Calu3 (cell line): ENCODE measurements at regions of chr6 and their contacts with region 1.

Region 1: GRCh38 chr6:77245026-77245425 is 218.3 kb downstream of the HTR1B start:
- DNase-seq: no peak
- H3K4me3 Mint-ChIP-seq: no peak overlapping the region
- H3K27ac Mint-ChIP-seq: no peak overlapping the region
- H3K4me1 Mint-ChIP-seq: peaks cover 9% of the 10 kb centered on the region
- H3K27me3 Mint-ChIP-seq: no peaks in the 10 kb centered on the region
- CTCF ChIP-seq: no peak

Region 2: DNA sequence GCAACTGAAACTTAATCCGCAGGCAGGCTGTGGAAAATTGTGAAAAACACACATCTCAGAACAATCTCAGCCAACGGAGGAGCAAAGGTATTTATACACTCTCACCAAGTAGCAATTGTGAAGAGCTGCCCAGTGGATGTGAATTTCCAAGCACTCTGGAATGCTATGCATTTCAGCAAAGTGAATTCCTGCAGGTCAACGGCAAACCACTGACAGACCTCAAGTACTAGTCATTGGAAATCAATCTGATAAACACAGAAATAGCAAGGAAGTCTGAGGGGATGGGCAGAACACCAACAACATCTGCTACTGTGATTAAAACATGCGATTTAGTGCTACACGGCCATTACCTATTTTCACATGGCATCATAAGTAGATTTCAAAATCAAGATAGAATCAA is 210.9 kb before region 1 on chr6:
- CTCF ChIA-PET with region 1: no interaction called
- intact Hi-C with region 1: no loop called
- DNase-seq: no peak
- H3K4me3 Mint-ChIP-seq: no peak overlapping the region
- H3K27ac Mint-ChIP-seq: no peak overlapping the region
- H3K4me1 Mint-ChIP-seq: no peaks in the 10 kb centered on the region
- H3K27me3 Mint-ChIP-seq: no peaks in the 10 kb centered on the region
- CTCF ChIP-seq: no peak

Region 3: GRCh38 chr6:77397561-77397960 is 152.5 kb after region 1 on chr6:
- CTCF ChIA-PET with region 1: no interaction called
- intact Hi-C with region 1: no loop called
- DNase-seq: no peak
- H3K4me3 Mint-ChIP-seq: no peak overlapping the region
- H3K27ac Mint-ChIP-seq: no peak overlapping the region
- H3K4me1 Mint-ChIP-seq: no peaks in the 10 kb centered on the region
- H3K27me3 Mint-ChIP-seq: no peaks in the 10 kb centered on the region
- CTCF ChIP-seq: no peak

Region 4: GRCh38 chr6:77450924-77451323 is 205.9 kb after region 1 on chr6:
- CTCF ChIA-PET with region 1: no interaction called
- intact Hi-C with region 1: loop called (anchors 5 kb)
- DNase-seq: no peak
- H3K4me3 Mint-ChIP-seq: no peak overlapping the region
- H3K27ac Mint-ChIP-seq: no peak overlapping the region
- H3K4me1 Mint-ChIP-seq: no peaks in the 10 kb centered on the region
- H3K27me3 Mint-ChIP-seq: no peaks in the 10 kb centered on the region
- CTCF ChIP-seq: no peak